Endothelial cell of umbilical vein (primary cell): ENCODE measurements at regions of chr9 and their contacts with region 1.

Region 1: DNA sequence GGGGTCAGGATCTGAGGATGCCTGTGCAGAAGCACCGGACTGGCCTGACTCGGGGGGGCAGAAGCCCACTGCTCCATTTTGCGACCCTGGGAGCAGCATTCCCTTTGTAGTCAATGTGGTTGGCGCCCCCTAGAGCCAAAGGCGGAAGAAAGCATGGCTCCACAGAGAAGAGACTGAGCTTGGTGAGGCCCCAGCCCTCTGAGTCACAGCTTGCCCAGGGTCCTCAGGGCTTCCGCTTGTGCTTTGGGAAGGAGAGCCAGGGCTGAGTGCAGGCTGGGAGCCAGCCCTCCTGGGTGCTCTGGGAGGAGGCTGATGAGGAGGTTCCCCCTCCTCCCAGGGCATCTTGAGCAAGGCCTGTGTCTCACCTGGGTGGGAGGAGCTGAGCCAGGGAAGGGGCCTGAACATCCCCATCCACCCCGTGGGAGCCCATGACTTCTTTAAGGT is 5.5 kb upstream of the AQP3 start:
- DNase-seq: peak; percentile 81
- H3K4me3 ChIP-seq: no peak overlapping the region
- H3K27ac ChIP-seq: peak overlapping the region; percentile 39
- H3K4me1 ChIP-seq: peaks cover 14% of the 10 kb centered on the region
- H3K27me3 ChIP-seq: peaks cover 0 to 2% of the 10 kb centered on the region in 2 experiments
- CTCF ChIP-seq: peak; percentile 82 to 94
- POLR2A ChIP-seq: no peak

Region 2: GRCh38 chr9:33320568-33321261 is 132.1 kb before region 1 on chr9:
- CTCF ChIA-PET with region 1: interaction called, 10 read pairs
- POLR2A ChIA-PET with region 1: no interaction called
- dilution Hi-C with region 1: no loop called
- intact Hi-C with region 1: no loop called
- DNase-seq: peak; percentile 86
- H3K4me3 ChIP-seq: no peak overlapping the region
- H3K27ac ChIP-seq: peak overlapping the region; percentile 86
- H3K4me1 ChIP-seq: peaks cover 22% of the 10 kb centered on the region
- H3K27me3 ChIP-seq: no peaks in the 10 kb centered on the region
- CTCF ChIP-seq: no peak
- POLR2A ChIP-seq: no peak

Region 3: DNA sequence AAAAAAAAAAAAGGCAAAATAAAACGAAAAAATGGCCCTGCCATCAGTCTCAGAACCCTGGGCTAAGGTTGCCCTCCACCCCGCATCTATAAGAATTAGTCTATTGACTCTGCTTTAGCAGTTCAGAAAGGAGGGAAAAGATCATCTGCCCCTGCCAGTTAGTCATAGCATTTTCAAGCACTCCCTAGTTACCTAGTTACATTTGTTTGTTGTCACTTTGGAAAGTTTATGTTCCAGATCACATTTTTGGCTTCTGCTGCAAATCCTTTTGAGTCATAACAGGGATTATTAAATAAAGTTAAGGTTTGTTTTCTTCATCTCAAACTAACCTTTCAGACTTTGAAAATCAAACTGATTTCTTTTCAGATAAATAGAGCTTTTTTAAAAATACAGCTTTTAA is 102.5 kb before region 1 on chr9:
- CTCF ChIA-PET with region 1: interaction called, 14 read pairs
- POLR2A ChIA-PET with region 1: no interaction called
- dilution Hi-C with region 1: no loop called
- intact Hi-C with region 1: no loop called
- DNase-seq: peak; percentile 43
- H3K4me3 ChIP-seq: no peak overlapping the region
- H3K27ac ChIP-seq: no peak overlapping the region
- H3K4me1 ChIP-seq: peaks cover 9% of the 10 kb centered on the region
- H3K27me3 ChIP-seq: no peaks in the 10 kb centered on the region
- CTCF ChIP-seq: no peak
- POLR2A ChIP-seq: no peak

Region 4: GRCh38 chr9:33381231-33381791 is 71.5 kb before region 1 on chr9:
- CTCF ChIA-PET with region 1: interaction called, 121 read pairs
- POLR2A ChIA-PET with region 1: no interaction called
- dilution Hi-C with region 1: no loop called
- intact Hi-C with region 1: no loop called
- DNase-seq: no peak
- H3K4me3 ChIP-seq: no peak overlapping the region
- H3K27ac ChIP-seq: no peak overlapping the region
- H3K4me1 ChIP-seq: no peaks in the 10 kb centered on the region
- H3K27me3 ChIP-seq: no peaks in the 10 kb centered on the region
- CTCF ChIP-seq: no peak
- POLR2A ChIP-seq: no peak

Region 5: DNA sequence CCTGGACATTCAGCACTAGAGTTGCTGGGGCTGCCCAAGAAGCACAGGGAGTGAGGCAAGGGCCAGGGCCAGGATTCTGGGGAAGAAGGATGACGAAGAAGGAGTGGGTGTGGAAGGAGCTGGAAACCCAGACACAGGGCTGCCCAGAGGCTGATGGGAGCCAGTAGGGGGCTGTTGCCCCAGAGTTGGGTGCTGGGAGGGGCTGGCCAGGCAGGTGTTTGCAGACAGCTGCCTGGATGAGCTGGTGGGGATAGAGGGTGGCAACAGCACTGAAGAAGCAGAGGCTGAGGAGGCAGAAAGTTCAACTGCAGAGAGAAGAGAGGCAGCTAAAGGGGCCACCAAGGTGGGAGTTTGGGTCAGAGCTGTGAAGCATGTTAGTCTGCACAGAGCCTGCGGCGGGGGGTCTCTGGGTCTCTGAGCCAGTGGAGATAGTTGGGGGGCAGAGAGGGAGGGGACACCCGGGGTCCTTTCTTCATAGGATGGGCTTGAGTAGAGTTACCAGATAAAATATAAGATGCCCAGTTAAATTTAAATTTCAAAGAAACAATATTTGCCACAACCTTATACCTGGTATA is 48.0 kb before region 1 on chr9:
- CTCF ChIA-PET with region 1: interaction called, 24 read pairs
- POLR2A ChIA-PET with region 1: interaction called, 3 read pairs
- dilution Hi-C with region 1: no loop called
- intact Hi-C with region 1: loop called (anchors 5 kb)
- DNase-seq: no peak
- H3K4me3 ChIP-seq: no peak overlapping the region
- H3K27ac ChIP-seq: no peak overlapping the region
- H3K4me1 ChIP-seq: no peaks in the 10 kb centered on the region
- H3K27me3 ChIP-seq: no peaks in the 10 kb centered on the region
- CTCF ChIP-seq: no peak
- POLR2A ChIP-seq: no peak

Region 6: DNA sequence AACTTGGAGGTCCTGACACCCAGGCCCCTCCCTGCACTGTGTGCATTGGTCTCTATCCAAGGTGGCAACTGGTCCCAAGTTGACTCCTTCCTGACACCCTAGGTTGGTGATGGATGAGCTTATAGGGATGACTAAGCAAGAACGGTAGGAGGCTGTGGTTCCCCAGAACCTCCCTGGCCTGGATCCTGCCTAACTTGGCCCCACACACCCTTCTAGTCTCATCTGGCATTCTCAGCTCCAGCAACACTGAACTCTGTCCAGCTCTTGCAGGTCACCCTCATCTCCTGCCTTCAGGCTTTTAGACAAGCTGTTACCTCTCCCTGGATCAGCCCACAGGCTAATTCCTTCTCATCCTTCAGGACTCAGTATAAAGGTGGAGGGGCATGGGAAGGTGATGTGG is 21.9 kb before region 1 on chr9:
- CTCF ChIA-PET with region 1: interaction called, 35 read pairs
- POLR2A ChIA-PET with region 1: no interaction called
- dilution Hi-C with region 1: no loop called
- intact Hi-C with region 1: no loop called
- DNase-seq: no peak
- H3K4me3 ChIP-seq: no peak overlapping the region
- H3K27ac ChIP-seq: no peak overlapping the region
- H3K4me1 ChIP-seq: no peaks in the 10 kb centered on the region
- H3K27me3 ChIP-seq: peaks cover 2 to 4% of the 10 kb centered on the region in 2 experiments
- CTCF ChIP-seq: no peak
- POLR2A ChIP-seq: no peak

Region 7: DNA sequence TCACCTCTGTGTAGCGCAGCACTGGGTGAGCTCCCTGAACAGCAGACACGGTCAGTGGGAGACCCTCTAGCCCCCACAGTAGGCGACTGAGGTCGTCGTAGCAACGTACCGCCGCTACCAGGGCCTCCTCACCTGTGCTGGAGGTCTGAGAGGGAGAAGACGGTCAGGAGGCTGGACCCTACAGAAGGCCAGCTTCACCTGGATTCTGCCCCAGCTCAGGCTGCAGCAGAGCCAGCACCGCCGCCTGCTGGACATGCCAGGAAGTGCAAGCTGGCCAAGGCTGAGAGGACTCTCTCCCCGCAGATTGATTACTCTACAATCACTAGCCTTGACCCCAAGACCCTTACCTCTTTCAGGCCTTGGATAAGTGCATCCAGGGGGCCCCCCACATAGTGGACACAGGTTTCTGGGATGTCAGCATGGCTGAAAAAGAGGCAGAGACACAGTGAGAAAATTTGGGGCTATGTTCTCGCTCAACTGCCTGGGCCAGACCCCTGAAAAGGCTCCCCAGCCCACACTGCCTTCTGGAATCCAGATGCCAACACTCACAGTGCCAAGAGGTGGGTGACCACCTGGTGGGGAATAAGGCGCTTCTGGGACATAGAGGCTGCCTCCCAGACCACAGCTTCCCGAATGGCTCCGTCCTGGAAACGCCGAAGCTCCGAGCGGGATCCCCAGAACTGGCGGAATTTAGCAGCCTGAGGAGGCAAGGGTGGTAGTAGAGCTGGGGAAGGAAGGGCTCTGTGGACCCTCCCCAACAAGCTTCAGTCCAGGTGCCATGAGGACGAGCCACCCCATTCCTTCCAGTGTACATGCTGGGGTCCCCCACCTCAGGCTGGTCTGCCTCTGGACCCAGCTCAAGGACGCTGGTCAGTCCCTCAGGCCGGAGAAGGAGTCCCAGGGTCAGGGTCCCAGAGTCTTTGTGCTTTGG is 14.0 kb after region 1 on chr9:
- CTCF ChIA-PET with region 1: interaction called, 119 read pairs
- POLR2A ChIA-PET with region 1: no interaction called
- dilution Hi-C with region 1: no loop called
- intact Hi-C with region 1: loop called (anchors 2 kb)
- DNase-seq: peak; percentile 38
- H3K4me3 ChIP-seq: no peak overlapping the region
- H3K27ac ChIP-seq: no peak overlapping the region
- H3K4me1 ChIP-seq: no peaks in the 10 kb centered on the region
- H3K27me3 ChIP-seq: no peaks in the 10 kb centered on the region
- CTCF ChIP-seq: peak; percentile 93 to 98
- POLR2A ChIP-seq: no peak